Activated naive CD4-positive, alpha-beta T cell treated with anti-CD3 and anti-CD28 coated beads for 36 hours (primary cell): ENCODE measurements at regions of chr10 and their contacts with region 1.

Region 1: DNA sequence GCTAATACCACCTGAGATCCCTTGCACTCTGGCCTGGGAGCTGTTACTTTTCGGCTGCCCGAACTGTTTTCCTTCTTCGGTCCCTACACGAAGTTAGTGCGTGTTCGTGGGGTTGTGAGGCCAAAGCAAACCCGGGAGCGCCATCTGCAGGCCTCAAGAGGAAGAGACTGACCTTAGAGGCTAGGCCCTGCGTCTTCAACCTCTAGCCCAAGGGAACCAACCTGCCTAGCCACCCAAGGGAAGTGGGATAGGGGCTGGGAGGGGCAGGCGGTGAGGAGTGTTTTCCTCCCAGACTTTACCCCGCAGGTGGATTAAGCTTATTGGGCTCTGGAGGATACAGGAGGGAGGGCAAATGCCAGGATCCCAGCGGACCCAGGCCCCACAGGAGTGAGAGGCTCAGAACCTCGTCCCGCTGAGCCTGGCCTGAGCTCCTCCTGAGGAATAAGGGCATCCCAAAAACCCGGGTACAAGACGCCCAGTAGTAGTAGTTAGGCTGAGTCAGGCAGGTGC is 1.7 kb upstream of the PAX2 start:
- DNase-seq: peak; percentile 67
- H3K4me3 Mint-ChIP-seq: no peak overlapping the region
- H3K27ac Mint-ChIP-seq: no peak overlapping the region
- H3K4me1 Mint-ChIP-seq: peaks cover 40% of the 10 kb centered on the region
- H3K27me3 Mint-ChIP-seq: peaks cover 83% of the 10 kb centered on the region

Region 2: GRCh38 chr10:100562008-100562711 is 181.5 kb before region 1 on chr10:
- CTCF ChIA-PET with region 1: interaction called, 35 read pairs
- intact Hi-C with region 1: loop called (anchors 1 kb)
- DNase-seq: peak; percentile 85
- H3K4me3 Mint-ChIP-seq: no peak overlapping the region
- H3K27ac Mint-ChIP-seq: no peak overlapping the region
- H3K4me1 Mint-ChIP-seq: peaks cover 9% of the 10 kb centered on the region
- H3K27me3 Mint-ChIP-seq: peaks cover 20% of the 10 kb centered on the region

Region 3: GRCh38 chr10:100670828-100671479 is 72.7 kb before region 1 on chr10:
- CTCF ChIA-PET with region 1: interaction called, 29 read pairs
- intact Hi-C with region 1: loop called (anchors 1 kb)
- DNase-seq: peak; percentile 67
- H3K4me3 Mint-ChIP-seq: no peak overlapping the region
- H3K27ac Mint-ChIP-seq: no peak overlapping the region
- H3K4me1 Mint-ChIP-seq: peaks cover 6% of the 10 kb centered on the region
- H3K27me3 Mint-ChIP-seq: peaks cover 58% of the 10 kb centered on the region

Region 4: GRCh38 chr10:100728928-100729861 is 14.5 kb before region 1 on chr10:
- CTCF ChIA-PET with region 1: interaction called, 46 read pairs
- intact Hi-C with region 1: no loop called
- DNase-seq: peak; percentile 65
- H3K4me3 Mint-ChIP-seq: peak overlapping the region; percentile 22
- H3K27ac Mint-ChIP-seq: no peak overlapping the region
- H3K4me1 Mint-ChIP-seq: peaks cover 21% of the 10 kb centered on the region
- H3K27me3 Mint-ChIP-seq: peaks cover 80% of the 10 kb centered on the region

Region 5: GRCh38 chr10:100872034-100872791 is 128.5 kb after region 1 on chr10:
- CTCF ChIA-PET with region 1: interaction called, 8 read pairs
- intact Hi-C with region 1: loop called (anchors 2 kb)
- DNase-seq: peak; percentile 82
- H3K4me3 Mint-ChIP-seq: no peak overlapping the region
- H3K27ac Mint-ChIP-seq: no peak overlapping the region
- H3K4me1 Mint-ChIP-seq: no peaks in the 10 kb centered on the region
- H3K27me3 Mint-ChIP-seq: peaks cover 11% of the 10 kb centered on the region

Region 6: GRCh38 chr10:101130984-101131961 is 387.6 kb after region 1 on chr10 and contains the start of gene TLX1:
- CTCF ChIA-PET with region 1: no interaction called
- intact Hi-C with region 1: loop called (anchors 10 kb)
- DNase-seq: no peak
- H3K4me3 Mint-ChIP-seq: no peak within 1 kb of the TSS
- H3K27ac Mint-ChIP-seq: no peak within 1 kb of the TSS
- H3K4me1 Mint-ChIP-seq: peaks cover 35% of the 10 kb centered on the region
- H3K27me3 Mint-ChIP-seq: peaks cover 83% of the 10 kb centered on the region
- total RNA-seq, gene TLX1: not detected